ENCODE measurements at regions of chr19 and their contacts with region 1.

Region 1: DNA sequence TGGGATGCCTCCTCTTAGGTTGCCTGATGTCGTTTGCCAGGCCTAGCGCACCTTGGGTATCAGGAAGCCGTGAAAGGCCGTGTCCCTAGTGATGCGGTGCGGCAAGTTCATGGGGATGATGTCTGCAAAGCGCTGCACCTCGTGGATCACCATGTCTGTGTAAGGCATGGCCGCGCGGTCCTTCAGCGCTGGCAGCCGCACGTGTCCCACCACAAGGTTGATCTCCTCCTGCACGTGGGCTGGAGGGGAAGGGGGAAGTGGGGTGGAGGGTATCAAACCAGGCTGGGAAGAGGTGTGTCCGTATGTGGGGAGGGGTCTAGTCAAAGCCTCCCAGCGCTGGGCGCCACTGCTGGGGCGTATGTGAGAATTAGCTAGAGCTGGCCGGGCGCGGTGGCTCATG is 23.2 kb downstream of the EGLN2 start:
- DNase-seq: no peak
- ATAC-seq: no peak
- H3K4me3 ChIP-seq: no peak overlapping the region
- H3K27ac ChIP-seq: peak overlapping the region; percentile 84
- H3K4me1 ChIP-seq: peaks cover 45 to 59% of the 10 kb centered on the region in 2 experiments
- H3K27me3 ChIP-seq: no peaks in the 10 kb centered on the region
- CTCF ChIP-seq: no peak
- EP300 ChIP-seq: no peak
- POLR2A ChIP-seq: no peak
- RAD21 ChIP-seq: no peak

Region 2: DNA sequence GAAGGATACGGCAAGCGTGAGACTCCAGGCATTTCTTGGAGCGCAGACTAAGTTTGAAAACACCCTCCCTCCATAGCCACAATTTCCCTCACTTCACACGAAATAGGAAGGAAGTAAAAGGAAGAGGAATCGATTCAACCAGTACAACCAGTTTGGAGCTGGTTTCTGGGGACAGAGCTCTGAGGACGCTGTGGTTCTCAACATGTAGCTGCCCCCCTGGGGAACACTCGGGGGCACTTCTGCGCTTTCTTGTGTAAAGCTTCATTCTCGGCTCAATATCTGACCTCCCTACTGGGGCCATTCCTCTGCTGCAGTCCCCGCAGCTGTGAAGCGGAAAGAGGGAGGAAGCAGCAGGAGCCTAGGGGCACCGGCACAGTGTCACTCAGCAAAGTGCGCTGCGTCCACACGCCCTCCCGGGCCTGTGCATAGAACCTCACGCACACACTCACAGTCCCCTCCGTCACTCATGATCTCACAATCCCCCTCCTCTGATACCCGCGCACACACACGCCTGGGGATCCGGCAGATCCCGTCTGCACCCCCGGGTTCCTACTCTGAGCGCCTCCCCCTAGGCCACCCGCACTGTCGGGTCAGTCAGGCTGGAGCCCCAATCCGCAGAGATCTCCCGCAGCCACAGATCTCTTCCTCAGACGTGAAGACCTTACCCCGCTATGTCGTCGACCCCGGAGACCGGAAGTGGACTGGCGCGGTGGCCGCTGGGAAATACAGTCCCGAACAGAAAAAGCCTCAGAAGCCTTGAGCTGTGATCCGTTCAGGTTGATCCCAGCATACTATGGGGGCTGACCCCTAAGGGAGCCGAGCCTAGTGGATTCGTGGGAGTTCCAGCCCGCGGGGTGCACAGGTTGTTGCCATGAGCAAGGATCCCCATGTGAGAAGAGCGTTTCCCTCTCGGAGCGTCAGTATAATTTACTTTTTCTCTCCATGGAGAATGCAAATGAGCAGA is 731.6 kb before region 1 on chr19 and contains the start of gene ZNF780A:
- CTCF ChIA-PET with region 1: no interaction called
- POLR2A ChIA-PET with region 1: no interaction called
- in situ Hi-C with region 1: no loop called
- intact Hi-C with region 1: no loop called
- DNase-seq: peak; percentile 81 to 92 (median 84)
- ATAC-seq: peak; percentile 96
- H3K4me3 ChIP-seq: peak within 1 kb of the TSS; percentile 85
- H3K27ac ChIP-seq: peak within 1 kb of the TSS; percentile 93
- H3K4me1 ChIP-seq: no peaks in the 10 kb centered on the region; a peak in 1 of 5 replicates
- H3K27me3 ChIP-seq: no peaks in the 10 kb centered on the region
- CTCF ChIP-seq: no peak
- EP300 ChIP-seq: peak; percentile 18; the same call in 1 of the 2 replicates
- POLR2A ChIP-seq: peak; percentile 94
- RAD21 ChIP-seq: no peak
- polyA plus RNA-seq, gene ZNF780A: 35.5 to 36.1 TPM

Region 3: DNA sequence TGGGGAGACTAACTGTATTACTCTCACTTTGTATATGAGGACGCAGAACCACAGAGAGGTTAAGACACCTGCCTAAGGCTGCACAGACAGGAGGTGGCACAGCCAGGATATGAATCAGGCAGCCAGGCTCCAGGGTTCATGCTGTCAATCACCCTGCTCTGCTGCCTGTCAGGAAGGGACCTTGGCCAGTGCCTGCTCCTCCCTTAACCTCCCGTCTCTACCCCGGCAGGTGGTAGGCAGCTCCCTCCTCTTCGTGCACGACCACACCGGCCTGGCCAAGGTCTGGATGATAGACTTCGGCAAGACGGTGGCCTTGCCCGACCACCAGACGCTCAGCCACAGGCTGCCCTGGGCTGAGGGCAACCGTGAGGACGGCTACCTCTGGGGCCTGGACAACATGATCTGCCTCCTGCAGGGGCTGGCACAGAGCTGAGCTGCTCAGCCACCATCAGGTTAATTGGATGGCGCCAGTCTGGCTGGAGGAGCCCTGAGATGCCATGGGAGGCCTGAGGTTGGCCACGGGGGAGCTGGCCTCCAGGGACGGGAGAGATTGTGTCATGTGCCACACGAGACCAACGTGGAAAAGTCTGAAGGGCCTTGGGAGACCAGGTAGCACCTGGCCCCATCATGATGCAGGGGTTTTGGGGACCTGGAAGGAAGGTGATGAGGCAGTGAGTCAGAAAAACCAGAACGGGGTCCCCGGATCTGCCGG is 82.9 kb before region 1 on chr19:
- CTCF ChIA-PET with region 1: no interaction called
- POLR2A ChIA-PET with region 1: no interaction called
- in situ Hi-C with region 1: no loop called
- intact Hi-C with region 1: no loop called
- DNase-seq: no peak
- ATAC-seq: no peak
- H3K4me3 ChIP-seq: no peak overlapping the region
- H3K27ac ChIP-seq: no peak overlapping the region
- H3K4me1 ChIP-seq: peaks cover 0 to 34% of the 10 kb centered on the region in 2 experiments; a peak in 3 of 5 replicates
- H3K27me3 ChIP-seq: no peaks in the 10 kb centered on the region
- CTCF ChIP-seq: no peak
- EP300 ChIP-seq: no peak
- POLR2A ChIP-seq: no peak
- RAD21 ChIP-seq: no peak

Region 4: DNA sequence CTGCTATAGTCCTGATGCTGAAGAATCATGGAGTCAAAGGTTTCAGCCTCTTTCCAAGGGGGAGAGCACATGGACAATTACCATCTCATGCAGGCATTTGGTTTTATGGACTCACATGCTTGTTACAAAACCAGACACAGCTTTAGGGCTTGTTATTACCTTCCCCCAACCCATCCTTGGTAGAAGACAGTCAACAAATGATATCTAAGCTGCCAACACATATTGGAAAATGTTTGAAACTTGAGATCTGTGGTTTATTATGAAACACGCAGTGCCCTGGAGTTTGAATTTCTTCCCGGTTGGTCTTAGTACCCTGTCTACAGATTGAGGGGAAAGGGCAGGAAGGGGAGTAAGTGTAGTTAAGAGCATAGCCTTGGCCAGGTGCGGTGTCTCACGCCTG is 40.6 kb after region 1 on chr19:
- CTCF ChIA-PET with region 1: no interaction called
- POLR2A ChIA-PET with region 1: no interaction called
- in situ Hi-C with region 1: no loop called
- intact Hi-C with region 1: loop called (anchors 2 kb)
- DNase-seq: peak in 1 of 4 experiments; percentile 16
- ATAC-seq: no peak
- H3K4me3 ChIP-seq: no peak overlapping the region
- H3K27ac ChIP-seq: peak overlapping the region; percentile 93
- H3K4me1 ChIP-seq: peaks cover 29 to 34% of the 10 kb centered on the region in 2 experiments
- H3K27me3 ChIP-seq: no peaks in the 10 kb centered on the region
- CTCF ChIP-seq: no peak
- EP300 ChIP-seq: no peak
- POLR2A ChIP-seq: no peak
- RAD21 ChIP-seq: no peak

Region 5: DNA sequence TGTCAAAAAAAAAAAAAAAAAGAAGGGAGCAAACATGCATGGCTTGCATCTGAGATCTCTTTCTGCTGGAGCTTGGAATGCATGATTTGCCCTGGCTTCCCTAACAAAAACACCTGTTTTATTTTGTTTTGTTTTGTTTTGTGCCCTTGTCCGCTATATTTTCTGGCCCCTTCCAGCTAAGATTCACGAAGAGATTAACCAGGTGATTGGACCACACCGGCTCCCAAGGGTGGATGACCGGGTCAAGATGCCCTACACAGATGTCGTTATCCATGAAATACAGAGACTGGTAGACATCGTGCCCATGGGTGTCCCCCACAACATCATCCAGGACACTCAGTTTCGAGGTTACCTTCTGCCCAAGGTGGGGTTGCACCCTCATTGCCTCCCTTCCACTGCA is 75.8 kb after region 1 on chr19:
- CTCF ChIA-PET with region 1: no interaction called
- POLR2A ChIA-PET with region 1: no interaction called
- in situ Hi-C with region 1: no loop called
- intact Hi-C with region 1: loop called (anchors 2 kb)
- DNase-seq: no peak
- ATAC-seq: no peak
- H3K4me3 ChIP-seq: no peak overlapping the region
- H3K27ac ChIP-seq: no peak overlapping the region
- H3K4me1 ChIP-seq: peaks cover 4 to 14% of the 10 kb centered on the region in 2 experiments; a peak in 4 of 5 replicates
- H3K27me3 ChIP-seq: no peaks in the 10 kb centered on the region
- CTCF ChIP-seq: no peak
- EP300 ChIP-seq: no peak
- POLR2A ChIP-seq: no peak
- RAD21 ChIP-seq: no peak